Activated CD4-positive, alpha-beta memory T cell treated with anti-CD3 and anti-CD28 coated beads for 36 hours (primary cell): ENCODE measurements at regions of chr5 and their contacts with region 1.

Region 1: DNA sequence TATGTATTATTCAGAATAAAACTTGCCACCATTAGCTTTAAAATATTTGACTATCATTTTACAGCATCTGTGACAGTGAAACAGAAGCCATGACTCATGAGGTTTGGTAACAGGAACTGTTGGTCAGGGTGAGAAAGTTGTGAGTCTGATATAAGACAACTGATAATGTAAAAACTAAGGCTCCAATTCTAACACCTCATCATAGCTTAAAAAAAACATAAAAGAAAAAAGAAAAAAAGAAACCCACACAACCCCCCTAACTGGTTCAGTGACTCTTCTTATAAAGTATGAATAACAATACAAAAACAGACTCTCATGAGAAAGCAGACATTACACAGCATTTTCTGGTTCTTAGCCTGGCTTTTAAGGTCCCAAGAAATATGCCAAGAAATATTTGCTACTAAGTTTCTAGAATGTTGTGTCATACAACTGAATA is 85.8 kb downstream of the MRPS27 start:
- DNase-seq: peak; percentile 25
- H3K4me3 Mint-ChIP-seq: no peak overlapping the region
- H3K27ac Mint-ChIP-seq: no peak overlapping the region
- H3K4me1 Mint-ChIP-seq: peaks cover 36% of the 10 kb centered on the region
- H3K27me3 Mint-ChIP-seq: no peaks in the 10 kb centered on the region

Region 2: DNA sequence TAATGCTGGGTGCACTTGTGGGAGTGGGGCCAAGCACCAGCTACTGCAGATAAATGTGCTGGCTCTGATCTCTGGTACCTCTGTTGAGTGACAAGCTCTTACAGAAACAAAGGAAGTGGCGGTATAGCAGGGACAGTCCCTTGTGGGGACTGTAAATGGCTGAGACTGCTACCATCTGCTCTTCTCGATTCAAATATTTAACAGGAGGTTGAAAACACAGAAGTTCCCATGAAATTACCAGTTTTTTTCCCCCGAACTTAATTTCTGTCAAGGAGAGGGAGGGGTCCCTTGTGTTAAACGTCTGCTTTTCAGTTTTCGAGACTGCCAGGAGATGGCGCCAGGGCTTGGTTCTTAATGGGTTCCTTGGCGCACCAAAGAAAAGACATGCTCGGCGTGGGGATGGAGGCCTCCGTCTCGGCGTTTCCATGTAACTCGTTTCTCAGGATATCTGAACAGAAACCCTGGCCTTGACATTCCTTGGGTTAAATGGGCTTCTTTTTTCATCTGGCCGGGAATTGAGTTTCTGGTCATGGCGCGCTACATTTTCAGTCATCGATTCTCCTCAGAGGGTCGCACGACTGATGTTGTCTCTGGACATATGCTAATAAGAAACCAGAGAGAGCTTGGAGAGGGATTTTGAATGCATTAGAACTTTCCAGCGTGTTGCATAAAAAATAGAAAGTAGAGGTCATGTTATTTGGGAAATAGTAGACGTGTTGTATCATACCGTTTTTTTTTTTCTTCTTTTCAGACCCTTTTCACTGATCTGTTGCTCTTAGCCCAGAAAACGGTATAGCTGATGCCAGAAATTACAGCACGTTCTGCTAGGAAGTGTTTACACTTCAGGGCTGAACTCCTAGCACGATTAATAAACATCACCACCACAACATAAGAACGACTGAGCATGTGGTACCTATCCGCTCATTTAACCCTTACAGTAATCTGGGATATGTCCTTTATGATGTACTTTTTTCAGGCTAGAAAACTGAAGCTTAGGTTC is 451.2 kb before region 1 on chr5:
- CTCF ChIA-PET with region 1: no interaction called
- POLR2A ChIA-PET with region 1: no interaction called
- intact Hi-C with region 1: loop called (anchors 2 kb)
- DNase-seq: peak; percentile 85
- H3K4me3 Mint-ChIP-seq: peak overlapping the region; percentile 48
- H3K27ac Mint-ChIP-seq: peak overlapping the region; percentile 43
- H3K4me1 Mint-ChIP-seq: peaks cover 24% of the 10 kb centered on the region
- H3K27me3 Mint-ChIP-seq: peaks cover 4% of the 10 kb centered on the region

Region 3: DNA sequence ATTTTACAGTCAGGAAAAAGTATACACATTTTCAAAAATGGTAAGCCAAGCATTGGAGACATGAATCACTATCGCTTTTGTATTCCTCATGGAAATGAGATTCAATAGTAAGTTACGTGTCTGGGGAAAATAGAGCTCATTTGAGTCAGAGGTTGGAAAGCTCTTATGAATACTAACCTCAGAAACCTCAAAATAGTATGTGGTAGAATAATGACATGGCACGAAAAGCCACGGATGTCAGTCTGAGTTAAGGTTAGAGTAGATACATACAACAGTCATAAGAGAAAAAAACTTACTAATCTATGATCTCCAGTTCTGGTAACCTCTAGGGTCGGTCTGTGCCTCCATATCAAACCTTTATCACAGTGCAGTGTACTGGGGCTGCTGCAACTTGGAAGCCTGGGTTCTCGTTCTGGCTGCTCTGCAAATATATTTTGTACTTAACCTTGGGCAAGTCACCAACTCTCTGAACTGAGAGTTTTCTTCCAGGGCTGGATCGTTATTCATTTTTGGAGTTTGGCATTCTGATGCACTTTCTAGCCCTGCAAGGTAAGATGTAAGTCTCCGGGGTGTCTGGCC is 95.3 kb before region 1 on chr5:
- CTCF ChIA-PET with region 1: interaction called, 6 read pairs
- POLR2A ChIA-PET with region 1: interaction called, 7 read pairs
- intact Hi-C with region 1: loop called (anchors 1 kb)
- DNase-seq: peak; percentile 35
- H3K4me3 Mint-ChIP-seq: no peak overlapping the region
- H3K27ac Mint-ChIP-seq: no peak overlapping the region
- H3K4me1 Mint-ChIP-seq: peaks cover 18% of the 10 kb centered on the region
- H3K27me3 Mint-ChIP-seq: peaks cover 39% of the 10 kb centered on the region

Region 4: GRCh38 chr5:72194846-72195245 is 39.4 kb before region 1 on chr5:
- CTCF ChIA-PET with region 1: interaction called, 3 read pairs
- POLR2A ChIA-PET with region 1: interaction called, 4 read pairs
- intact Hi-C with region 1: loop called (anchors 1 kb)
- DNase-seq: peak; percentile 78
- H3K4me3 Mint-ChIP-seq: no peak overlapping the region
- H3K27ac Mint-ChIP-seq: peak overlapping the region; percentile 16
- H3K4me1 Mint-ChIP-seq: peaks cover 15% of the 10 kb centered on the region
- H3K27me3 Mint-ChIP-seq: peaks cover 66% of the 10 kb centered on the region

Region 5: GRCh38 chr5:72268753-72269410 is 34.6 kb after region 1 on chr5:
- CTCF ChIA-PET with region 1: interaction called, 3 read pairs
- POLR2A ChIA-PET with region 1: no interaction called
- intact Hi-C with region 1: loop called (anchors 5 kb)
- DNase-seq: peak; percentile 46
- H3K4me3 Mint-ChIP-seq: no peak overlapping the region
- H3K27ac Mint-ChIP-seq: no peak overlapping the region
- H3K4me1 Mint-ChIP-seq: no peaks in the 10 kb centered on the region
- H3K27me3 Mint-ChIP-seq: no peaks in the 10 kb centered on the region

Region 6: GRCh38 chr5:72280581-72281170 is 46.4 kb after region 1 on chr5:
- CTCF ChIA-PET with region 1: no interaction called
- POLR2A ChIA-PET with region 1: no interaction called
- intact Hi-C with region 1: no loop called
- DNase-seq: no peak
- H3K4me3 Mint-ChIP-seq: no peak overlapping the region
- H3K27ac Mint-ChIP-seq: no peak overlapping the region
- H3K4me1 Mint-ChIP-seq: no peaks in the 10 kb centered on the region
- H3K27me3 Mint-ChIP-seq: no peaks in the 10 kb centered on the region

Region 7: GRCh38 chr5:72347801-72348305 is 113.6 kb after region 1 on chr5:
- CTCF ChIA-PET with region 1: no interaction called
- POLR2A ChIA-PET with region 1: no interaction called
- intact Hi-C with region 1: loop called (anchors 1 kb)
- DNase-seq: peak; percentile 35
- H3K4me3 Mint-ChIP-seq: no peak overlapping the region
- H3K27ac Mint-ChIP-seq: peak overlapping the region; percentile 70
- H3K4me1 Mint-ChIP-seq: peaks cover 32% of the 10 kb centered on the region
- H3K27me3 Mint-ChIP-seq: no peaks in the 10 kb centered on the region

Region 8: GRCh38 chr5:72451741-72452505 is 217.6 kb after region 1 on chr5:
- CTCF ChIA-PET with region 1: no interaction called
- POLR2A ChIA-PET with region 1: no interaction called
- intact Hi-C with region 1: no loop called
- DNase-seq: no peak
- H3K4me3 Mint-ChIP-seq: no peak overlapping the region
- H3K27ac Mint-ChIP-seq: no peak overlapping the region
- H3K4me1 Mint-ChIP-seq: no peaks in the 10 kb centered on the region
- H3K27me3 Mint-ChIP-seq: peaks cover 2% of the 10 kb centered on the region